ENCODE measurements at regions of chr1 and their contacts with region 1.

Region 1: DNA sequence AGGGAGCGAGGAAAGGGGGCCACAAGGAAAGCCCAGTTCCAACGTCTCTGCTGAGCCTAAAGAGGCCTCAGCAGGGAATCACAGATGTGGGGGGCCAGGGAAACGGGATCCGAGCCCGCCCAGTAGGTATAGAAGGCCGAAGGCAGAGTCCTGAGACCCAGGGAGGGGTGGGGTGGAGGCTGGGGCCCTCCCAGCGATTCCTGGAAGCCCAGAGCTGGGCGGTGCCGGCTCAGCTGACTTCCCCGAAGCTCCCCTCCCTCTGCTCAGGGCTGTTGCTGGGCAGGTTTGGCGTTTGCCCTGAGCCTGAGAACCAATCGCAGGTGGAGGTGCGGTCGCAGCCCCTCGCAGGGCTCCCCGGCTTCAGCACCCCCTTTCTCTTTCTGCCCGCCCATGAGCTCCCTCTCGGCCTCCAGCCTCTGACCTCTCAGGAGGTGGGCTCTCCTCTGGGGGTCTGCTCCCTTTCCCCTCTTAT is 12.8 kb downstream of the ADAMTSL4 start:
- DNase-seq: peak; percentile 78 to 96
- H3K4me3 ChIP-seq: peak overlapping the region; percentile 60 to 63
- H3K27ac ChIP-seq: peak overlapping the region; percentile 98 to 100
- H3K4me1 ChIP-seq: peaks cover 68 to 78% of the 10 kb centered on the region in 2 donors
- H3K27me3 ChIP-seq: no peaks in the 10 kb centered on the region
- CTCF ChIP-seq: no peak

Region 2: DNA sequence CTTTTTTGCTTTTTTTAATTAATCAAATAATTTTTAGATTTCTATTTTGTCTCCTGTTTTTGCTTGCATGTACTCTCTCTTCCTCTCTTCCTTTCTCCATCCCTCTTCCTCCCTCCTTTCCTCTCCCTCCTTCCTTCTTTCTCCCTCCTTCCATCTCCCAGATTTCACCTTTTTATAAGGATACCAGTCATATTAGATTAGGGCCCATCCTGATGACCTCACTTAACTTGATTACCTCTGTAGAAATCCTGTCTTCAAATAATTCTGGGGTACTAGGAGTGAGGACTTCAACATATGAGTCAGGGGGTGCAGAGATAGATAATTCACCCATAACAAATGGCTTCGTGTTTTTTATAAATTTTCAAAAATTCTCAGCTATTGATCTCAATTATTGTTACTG is 112.6 kb before region 1 on chr1:
- intact Hi-C with region 1: no loop called
- DNase-seq: no peak
- H3K4me3 ChIP-seq: no peak overlapping the region
- H3K27ac ChIP-seq: no peak overlapping the region
- H3K4me1 ChIP-seq: no peaks in the 10 kb centered on the region
- H3K27me3 ChIP-seq: no peaks in the 10 kb centered on the region
- CTCF ChIP-seq: no peak

Region 3: GRCh38 chr1:150613061-150613920 is 51.3 kb after region 1 on chr1:
- intact Hi-C with region 1: loop called (anchors 2 kb)
- DNase-seq: peak; percentile 36 to 84
- H3K4me3 ChIP-seq: peak overlapping the region in 1 of 2 donors; percentile 27
- H3K27ac ChIP-seq: peak overlapping the region; percentile 85 to 91
- H3K4me1 ChIP-seq: peaks cover 18 to 43% of the 10 kb centered on the region in 2 donors
- H3K27me3 ChIP-seq: no peaks in the 10 kb centered on the region
- CTCF ChIP-seq: no peak

Region 4: GRCh38 chr1:150621497-150622302 is 59.7 kb after region 1 on chr1:
- intact Hi-C with region 1: loop called (anchors 1 kb)
- DNase-seq: peak in 1 of 2 donors; percentile 84
- H3K4me3 ChIP-seq: no peak overlapping the region
- H3K27ac ChIP-seq: peak overlapping the region; percentile 71 to 74
- H3K4me1 ChIP-seq: peaks cover 10 to 31% of the 10 kb centered on the region in 2 donors
- H3K27me3 ChIP-seq: no peaks in the 10 kb centered on the region
- CTCF ChIP-seq: peak; percentile 72 to 74 (median 72)

Measured in ascending aorta (tissue), 2 donors.